ENCODE measurements at regions of chr17 and their contacts with region 1.

Region 1: DNA sequence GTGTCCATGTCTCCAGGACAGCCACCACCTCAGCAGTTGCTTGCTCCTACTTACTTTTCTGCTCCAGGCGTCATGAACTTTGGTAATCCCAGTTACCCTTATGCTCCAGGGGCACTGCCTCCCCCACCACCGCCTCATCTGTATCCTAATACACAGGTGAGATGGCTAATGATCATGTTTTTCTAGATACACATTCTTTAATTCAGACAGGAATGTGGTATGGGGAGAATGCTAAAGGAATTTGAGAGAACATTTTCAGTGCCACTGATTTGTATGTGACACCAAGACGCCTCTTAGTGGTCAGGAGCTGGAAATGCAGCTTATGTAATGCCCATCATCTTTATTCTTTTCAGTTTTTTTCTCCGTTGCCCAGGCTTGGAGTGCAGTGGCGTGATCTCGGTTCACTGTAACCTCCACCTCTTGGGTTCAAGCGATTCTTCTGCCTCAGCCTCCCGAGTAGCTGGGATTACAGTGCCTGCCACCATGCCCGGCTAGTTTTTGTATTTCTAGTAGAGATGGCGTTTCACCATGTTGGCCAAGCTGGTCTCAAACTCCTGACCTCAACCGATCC is 8.9 kb upstream of the RAPGEFL1 start:
- DNase-seq: peak; percentile 77
- ATAC-seq: peak; percentile 76 to 83
- H3K4me3 ChIP-seq: no peak overlapping the region
- H3K27ac ChIP-seq: 0 out of 6 replicates have a peak overlapping the region, but pooled peaks of 1 of the 2 experiments have one; percentile 18
- H3K4me1 ChIP-seq: peaks cover 4% of the 10 kb centered on the region; the same call in 2 of the 3 replicates
- CTCF ChIP-seq: peak; percentile 84
- EP300 ChIP-seq: no peak
- POLR2A ChIP-seq: no peak
- RAD21 ChIP-seq: peak; percentile 79 to 81

Region 2: DNA sequence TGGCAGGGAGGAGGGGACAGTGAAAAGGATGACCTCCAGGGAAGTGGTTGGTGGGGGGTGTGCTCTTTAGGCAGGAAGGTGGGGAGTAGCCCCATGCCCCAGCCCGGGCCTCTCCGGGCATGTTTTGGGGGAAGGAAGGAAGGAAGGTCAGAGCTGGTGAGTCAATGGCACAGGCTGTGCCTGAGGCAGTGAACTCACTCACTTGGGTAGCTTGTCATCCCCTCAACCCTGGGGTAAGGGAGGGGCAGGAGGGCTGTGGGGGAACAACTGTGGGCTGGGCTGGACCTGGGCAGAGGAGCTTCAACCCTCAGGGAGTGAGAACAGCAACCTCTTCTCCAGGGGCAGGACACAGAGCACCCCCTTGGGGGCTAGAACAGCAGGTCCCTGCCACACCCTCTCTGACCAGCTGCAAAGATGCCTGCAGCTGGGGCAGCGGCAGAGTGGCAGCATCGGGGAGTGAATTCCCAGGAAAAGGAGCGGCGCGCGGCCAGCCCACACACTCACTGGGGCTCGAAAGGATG is 146.8 kb before region 1 on chr17:
- CTCF ChIA-PET with region 1: interaction called, 31 read pairs
- POLR2A ChIA-PET with region 1: no interaction called
- DNase-seq: peak; percentile 56 to 80
- ATAC-seq: peak; percentile 57 to 72
- H3K4me3 ChIP-seq: no peak overlapping the region
- H3K27ac ChIP-seq: peak overlapping the region; percentile 83 to 84
- H3K4me1 ChIP-seq: peaks cover 43% of the 10 kb centered on the region
- CTCF ChIP-seq: no peak
- EP300 ChIP-seq: no peak
- POLR2A ChIP-seq: no peak
- RAD21 ChIP-seq: no peak

Region 3: GRCh38 chr17:40062329-40063186 is 105.8 kb before region 1 on chr17 and contains the start of gene THRA:
- CTCF ChIA-PET with region 1: interaction called, 14 read pairs
- POLR2A ChIA-PET with region 1: no interaction called
- DNase-seq: peak in 1 of 2 experiments; percentile 68
- ATAC-seq: peak; percentile 65 to 70
- H3K4me3 ChIP-seq: peak within 1 kb of the TSS; percentile 98
- H3K27ac ChIP-seq: peak within 1 kb of the TSS; percentile 92 to 98
- H3K4me1 ChIP-seq: peaks cover 33% of the 10 kb centered on the region
- CTCF ChIP-seq: peak; percentile 86
- EP300 ChIP-seq: no peak
- POLR2A ChIP-seq: no peak
- RAD21 ChIP-seq: no peak; a peak in 3 of 5 replicates
- polyA plus RNA-seq, gene THRA: 20.1 and 27.4 TPM in 2 replicates

Region 4: GRCh38 chr17:40107522-40108174 is 60.7 kb before region 1 on chr17:
- CTCF ChIA-PET with region 1: interaction called, 176 read pairs
- POLR2A ChIA-PET with region 1: interaction called, 19 read pairs
- DNase-seq: no peak
- ATAC-seq: no peak
- H3K4me3 ChIP-seq: no peak overlapping the region
- H3K27ac ChIP-seq: peak overlapping the region; percentile 29 to 70; a peak in 5 of 6 replicates
- H3K4me1 ChIP-seq: peaks cover 65% of the 10 kb centered on the region
- CTCF ChIP-seq: no peak
- EP300 ChIP-seq: no peak
- POLR2A ChIP-seq: no peak
- RAD21 ChIP-seq: no peak

Region 5: GRCh38 chr17:40130352-40131042 is 37.9 kb before region 1 on chr17:
- CTCF ChIA-PET with region 1: interaction called, 32 read pairs
- POLR2A ChIA-PET with region 1: no interaction called
- DNase-seq: no peak
- ATAC-seq: peak; percentile 37 to 52; a peak in 3 of 6 replicates
- H3K4me3 ChIP-seq: no peak overlapping the region
- H3K27ac ChIP-seq: no peak overlapping the region
- H3K4me1 ChIP-seq: peaks cover 3% of the 10 kb centered on the region; the same call in 1 of the 3 replicates
- CTCF ChIP-seq: no peak
- EP300 ChIP-seq: no peak
- POLR2A ChIP-seq: no peak
- RAD21 ChIP-seq: no peak

Region 6: DNA sequence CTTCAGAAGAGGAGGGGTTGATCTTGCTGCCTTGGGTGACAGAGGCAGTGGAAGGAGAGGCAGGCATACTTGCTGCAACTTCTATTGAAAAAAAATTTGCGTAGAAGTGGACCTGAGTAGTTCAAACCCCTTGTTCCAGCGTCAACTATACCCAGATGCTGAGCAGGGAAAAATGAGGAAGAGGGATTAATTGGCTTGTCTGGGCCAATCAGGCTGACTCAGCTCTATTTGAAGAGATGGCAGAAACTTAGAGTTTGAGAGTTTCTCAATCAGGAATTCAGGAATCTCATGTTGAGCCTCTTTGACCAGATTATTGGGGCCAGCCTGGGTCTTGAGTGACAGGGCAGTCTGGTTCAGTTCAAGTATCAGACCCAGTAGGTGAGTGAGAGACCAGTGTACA is 10.4 kb before region 1 on chr17:
- CTCF ChIA-PET with region 1: interaction called, 76 read pairs
- POLR2A ChIA-PET with region 1: no interaction called
- DNase-seq: no peak
- ATAC-seq: no peak; a peak in 1 of 6 replicates
- H3K4me3 ChIP-seq: no peak overlapping the region
- H3K27ac ChIP-seq: no peak overlapping the region
- H3K4me1 ChIP-seq: peaks cover 5% of the 10 kb centered on the region; the same call in 1 of the 3 replicates
- CTCF ChIP-seq: no peak
- EP300 ChIP-seq: no peak
- POLR2A ChIP-seq: no peak
- RAD21 ChIP-seq: no peak